ENCODE measurements at regions of chr6 and their contacts with region 1.

Region 1: DNA sequence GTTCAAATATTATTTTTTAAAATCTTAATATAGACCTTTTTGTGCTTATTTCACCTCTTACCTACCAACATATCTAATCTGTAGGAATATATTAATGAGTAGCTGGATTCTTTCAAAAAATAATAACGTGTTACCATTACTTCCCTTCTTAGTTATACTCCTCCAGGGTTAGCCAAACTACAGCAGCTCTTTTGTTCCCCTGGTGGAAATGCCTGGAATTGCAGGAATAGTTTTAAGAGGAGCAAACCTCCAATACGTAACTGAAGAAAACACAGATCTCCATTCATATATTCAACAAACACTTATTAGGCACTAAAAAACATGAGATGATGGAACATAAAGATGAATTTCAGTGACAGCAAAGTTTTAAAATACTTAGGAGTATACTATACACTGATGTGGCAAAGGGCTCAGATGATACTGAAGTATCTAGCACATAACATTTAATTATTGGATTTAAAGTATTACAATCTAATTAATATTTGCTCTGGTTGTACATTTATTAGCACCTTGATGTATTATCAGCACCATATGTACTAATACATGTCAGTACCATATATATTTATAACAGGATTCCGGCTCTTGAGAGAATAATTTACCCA is 78.3 kb downstream of the TBX18 start:
- DNase-seq: no peak
- H3K4me3 ChIP-seq: no peak overlapping the region
- H3K27ac ChIP-seq: no peak overlapping the region
- H3K4me1 ChIP-seq: no peaks in the 10 kb centered on the region
- H3K27me3 ChIP-seq: no peaks in the 10 kb centered on the region
- CTCF ChIP-seq: peak; percentile 15 to 41
- POLR2A ChIP-seq: no peak

Region 2: GRCh38 chr6:84560436-84561375 is 125.4 kb before region 1 on chr6:
- CTCF ChIA-PET with region 1: no interaction called
- POLR2A ChIA-PET with region 1: no interaction called
- dilution Hi-C with region 1: no loop called
- intact Hi-C with region 1: no loop called
- DNase-seq: no peak
- H3K4me3 ChIP-seq: no peak overlapping the region
- H3K27ac ChIP-seq: no peak overlapping the region
- H3K4me1 ChIP-seq: no peaks in the 10 kb centered on the region
- H3K27me3 ChIP-seq: no peaks in the 10 kb centered on the region
- CTCF ChIP-seq: no peak
- POLR2A ChIP-seq: no peak

Region 3: DNA sequence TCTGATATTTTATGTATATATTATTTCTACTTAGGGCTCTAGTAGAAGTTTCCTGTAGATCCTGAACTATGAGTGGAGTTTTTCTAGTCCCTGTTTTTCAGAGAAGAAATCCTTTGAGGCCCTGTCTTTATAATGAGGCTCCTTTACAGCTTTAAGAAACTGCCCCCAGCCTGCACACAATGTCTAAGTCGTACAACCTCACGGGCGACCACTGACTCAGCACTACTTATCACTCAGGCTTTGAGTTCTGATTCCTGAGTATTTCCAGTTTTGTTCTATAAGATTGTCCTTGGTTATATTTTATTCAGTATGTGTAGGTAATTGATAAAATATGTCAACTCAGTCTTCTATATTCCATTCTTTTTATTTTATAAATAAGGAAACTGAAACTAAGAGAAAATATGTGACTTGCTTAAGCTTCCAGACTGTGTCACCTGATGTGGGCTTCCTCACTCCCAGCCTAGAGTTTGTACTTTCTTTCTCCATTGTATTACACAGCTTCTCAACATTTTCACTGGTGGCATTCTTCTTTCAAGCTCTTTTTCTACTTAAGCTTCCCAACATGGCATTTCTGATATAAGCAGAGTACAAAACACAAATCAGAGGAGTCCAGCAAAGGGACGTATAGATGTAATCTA is 88.7 kb before region 1 on chr6:
- CTCF ChIA-PET with region 1: no interaction called
- POLR2A ChIA-PET with region 1: no interaction called
- dilution Hi-C with region 1: no loop called
- intact Hi-C with region 1: no loop called
- DNase-seq: peak; percentile 32
- H3K4me3 ChIP-seq: no peak overlapping the region
- H3K27ac ChIP-seq: no peak overlapping the region
- H3K4me1 ChIP-seq: peaks cover 10% of the 10 kb centered on the region
- H3K27me3 ChIP-seq: no peaks in the 10 kb centered on the region
- CTCF ChIP-seq: no peak
- POLR2A ChIP-seq: no peak

Region 4: DNA sequence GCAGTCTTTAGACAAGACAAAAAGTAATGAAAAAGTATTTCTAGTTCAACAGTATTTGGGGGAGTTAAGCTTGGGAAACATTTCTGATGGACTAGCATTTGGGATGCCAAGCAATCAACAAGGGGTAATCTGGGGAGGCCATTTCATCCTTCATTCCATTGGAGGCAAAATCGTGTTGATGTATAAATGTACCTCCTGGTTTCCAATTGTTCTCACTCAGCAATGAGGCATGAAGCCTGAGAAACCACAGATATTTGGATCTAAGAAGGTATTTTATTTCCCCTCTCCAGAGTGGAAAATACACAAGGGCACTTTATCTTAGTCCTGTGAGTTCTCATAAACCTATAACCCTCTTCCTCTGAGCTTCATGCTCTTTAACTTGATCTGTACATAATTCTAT is 10.1 kb after region 1 on chr6:
- CTCF ChIA-PET with region 1: interaction called, 10 read pairs
- POLR2A ChIA-PET with region 1: no interaction called
- dilution Hi-C with region 1: no loop called
- intact Hi-C with region 1: no loop called
- DNase-seq: no peak
- H3K4me3 ChIP-seq: no peak overlapping the region
- H3K27ac ChIP-seq: no peak overlapping the region
- H3K4me1 ChIP-seq: no peaks in the 10 kb centered on the region
- H3K27me3 ChIP-seq: no peaks in the 10 kb centered on the region
- CTCF ChIP-seq: no peak
- POLR2A ChIP-seq: no peak

Region 5: DNA sequence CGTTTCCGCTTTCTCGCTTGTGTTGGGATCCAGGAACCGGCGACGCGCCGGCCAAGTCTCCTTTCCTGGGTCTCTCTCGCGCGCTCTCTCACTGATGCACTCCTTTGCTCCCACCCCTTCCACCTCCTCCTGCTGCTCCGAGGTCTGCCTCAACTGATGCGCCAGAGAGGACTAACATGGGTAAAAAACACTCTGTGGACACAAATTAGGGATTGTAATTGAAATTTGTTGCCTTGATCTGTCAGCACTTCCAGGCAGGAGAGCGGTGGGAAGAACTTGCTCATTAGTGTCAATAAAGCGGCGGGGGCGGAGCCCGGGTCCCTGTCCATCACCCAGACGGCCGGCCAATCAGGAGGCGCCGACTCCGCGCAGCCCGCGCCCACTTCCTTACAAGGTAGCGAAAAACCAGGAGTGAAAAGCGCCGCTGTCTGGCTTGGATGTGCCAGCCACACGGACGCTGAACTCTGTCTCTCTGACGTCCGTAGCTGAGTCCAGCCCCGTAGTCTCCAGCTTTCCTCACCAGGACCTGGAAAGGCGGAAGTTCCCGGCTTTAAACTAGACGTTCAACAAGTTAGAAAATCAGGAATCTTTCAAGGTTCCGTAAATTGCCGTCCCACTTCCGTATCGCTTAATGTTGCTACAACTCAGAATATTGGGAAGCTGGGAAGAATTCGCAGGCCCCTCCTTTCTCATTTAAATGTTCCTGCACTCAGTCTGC is 78.4 kb after region 1 on chr6 and contains the start of gene TBX18:
- CTCF ChIA-PET with region 1: no interaction called
- POLR2A ChIA-PET with region 1: no interaction called
- dilution Hi-C with region 1: no loop called
- intact Hi-C with region 1: no loop called
- DNase-seq: peak; percentile 99
- H3K4me3 ChIP-seq: peak within 1 kb of the TSS; percentile 63 to 95 (median 68)
- H3K27ac ChIP-seq: peak within 1 kb of the TSS; percentile 79
- H3K4me1 ChIP-seq: peaks cover 34% of the 10 kb centered on the region
- H3K27me3 ChIP-seq: peaks cover 27 to 38% of the 10 kb centered on the region in 2 experiments
- CTCF ChIP-seq: peak in 1 of 2 donors; percentile 25
- POLR2A ChIP-seq: peak; percentile 88
- total RNA-seq, gene TBX18: 28.4 and 35.3 TPM in 2 replicates

Region 6: DNA sequence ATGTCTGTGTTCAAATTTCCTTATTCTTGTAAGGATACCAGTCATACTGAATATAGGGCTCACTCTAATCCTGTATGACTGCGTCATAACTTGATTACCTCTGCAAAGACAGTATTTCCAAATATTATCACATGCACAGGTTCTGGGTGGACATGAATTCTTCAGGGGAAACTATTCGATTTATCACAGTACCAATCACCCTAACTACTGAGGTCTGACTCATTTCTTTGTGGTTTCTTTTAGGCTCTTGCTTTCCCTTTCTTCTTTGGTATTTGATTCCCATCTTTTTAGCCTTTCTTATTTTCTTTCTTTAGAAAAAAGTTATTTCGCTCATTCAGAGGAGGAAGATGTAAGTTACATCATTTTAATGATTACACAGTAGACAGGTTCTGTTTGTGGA is 118.6 kb after region 1 on chr6:
- CTCF ChIA-PET with region 1: no interaction called
- POLR2A ChIA-PET with region 1: no interaction called
- dilution Hi-C with region 1: no loop called
- intact Hi-C with region 1: no loop called
- DNase-seq: no peak
- H3K4me3 ChIP-seq: no peak overlapping the region
- H3K27ac ChIP-seq: no peak overlapping the region
- H3K4me1 ChIP-seq: peaks cover 13% of the 10 kb centered on the region
- H3K27me3 ChIP-seq: peaks cover 0 to 2% of the 10 kb centered on the region in 2 experiments
- CTCF ChIP-seq: no peak
- POLR2A ChIP-seq: no peak

Measured in endothelial cell of umbilical vein (primary cell).